Transverse colon (tissue), 4 donors: ENCODE measurements at regions of chr4 and their contacts with region 1.

Region 1: DNA sequence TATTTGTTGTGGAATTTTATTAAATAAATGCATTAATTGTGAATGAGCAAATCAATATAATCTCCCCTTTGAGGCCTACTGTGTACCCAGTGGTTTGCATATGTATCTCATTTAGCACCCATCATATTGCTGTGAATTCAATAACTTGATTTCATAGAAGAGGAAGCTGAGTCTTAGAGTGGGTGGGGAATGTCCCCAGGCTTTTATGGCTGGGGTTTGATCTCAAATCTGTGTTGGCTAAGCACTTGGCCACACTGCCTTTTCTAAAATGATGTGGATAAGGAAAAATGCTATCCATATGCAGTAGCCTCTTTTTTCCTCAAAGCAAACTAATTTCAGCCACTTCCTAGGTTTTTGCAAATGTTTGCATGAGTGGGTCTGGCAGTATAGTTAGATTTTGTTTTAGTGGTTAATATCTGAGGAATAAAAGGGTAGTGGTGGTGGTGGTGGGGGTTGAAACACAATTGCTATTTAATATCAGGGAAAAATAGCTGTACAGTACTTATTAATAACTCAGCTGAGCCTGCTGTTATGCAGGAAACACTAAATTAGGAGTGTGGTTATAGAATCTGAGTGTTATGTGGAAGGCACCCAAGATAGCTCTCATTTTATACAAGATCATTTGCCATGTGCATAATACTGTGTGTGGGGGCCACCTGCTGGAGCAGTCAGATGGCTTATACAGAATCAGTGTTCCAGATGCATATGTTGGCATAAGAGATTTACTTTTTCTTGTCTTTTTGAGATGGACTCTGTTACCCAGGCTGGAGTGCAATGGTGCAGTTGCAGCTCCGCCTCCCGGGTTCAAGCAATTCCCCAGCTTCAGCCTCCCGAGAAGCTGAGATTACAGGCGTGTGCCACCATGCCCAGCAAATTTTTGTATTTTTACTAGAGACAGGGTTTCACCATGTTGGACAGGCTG is 108.0 kb downstream of the TMEM131L start:
- DNase-seq: peak; percentile 69
- H3K4me3 ChIP-seq: no peak overlapping the region
- H3K27ac ChIP-seq: no peak overlapping the region
- H3K4me1 ChIP-seq: peaks cover 0 to 33% (median 10%) of the 10 kb centered on the region in 4 donors
- H3K27me3 ChIP-seq: no peaks in the 10 kb centered on the region
- CTCF ChIP-seq: peak; percentile 52 to 65 (median 54)
- EP300 ChIP-seq: no peak
- POLR2A ChIP-seq: no peak

Region 2: GRCh38 chr4:153142700-153143438 is 431.3 kb before region 1 on chr4:
- in situ Hi-C with region 1: loop called in 1 of 4 experiments (anchors 25 kb)
- intact Hi-C with region 1: loop called (anchors 10 kb)
- DNase-seq: peak; percentile 85
- H3K4me3 ChIP-seq: peak overlapping the region in 1 of 4 donors; percentile 26
- H3K27ac ChIP-seq: peak overlapping the region; percentile 20 to 60 (median 38)
- H3K4me1 ChIP-seq: peaks cover 0 to 14% (median 10%) of the 10 kb centered on the region in 4 donors
- H3K27me3 ChIP-seq: no peaks in the 10 kb centered on the region
- CTCF ChIP-seq: peak; percentile 84 to 93 (median 84)
- EP300 ChIP-seq: no peak
- POLR2A ChIP-seq: no peak

Region 3: DNA sequence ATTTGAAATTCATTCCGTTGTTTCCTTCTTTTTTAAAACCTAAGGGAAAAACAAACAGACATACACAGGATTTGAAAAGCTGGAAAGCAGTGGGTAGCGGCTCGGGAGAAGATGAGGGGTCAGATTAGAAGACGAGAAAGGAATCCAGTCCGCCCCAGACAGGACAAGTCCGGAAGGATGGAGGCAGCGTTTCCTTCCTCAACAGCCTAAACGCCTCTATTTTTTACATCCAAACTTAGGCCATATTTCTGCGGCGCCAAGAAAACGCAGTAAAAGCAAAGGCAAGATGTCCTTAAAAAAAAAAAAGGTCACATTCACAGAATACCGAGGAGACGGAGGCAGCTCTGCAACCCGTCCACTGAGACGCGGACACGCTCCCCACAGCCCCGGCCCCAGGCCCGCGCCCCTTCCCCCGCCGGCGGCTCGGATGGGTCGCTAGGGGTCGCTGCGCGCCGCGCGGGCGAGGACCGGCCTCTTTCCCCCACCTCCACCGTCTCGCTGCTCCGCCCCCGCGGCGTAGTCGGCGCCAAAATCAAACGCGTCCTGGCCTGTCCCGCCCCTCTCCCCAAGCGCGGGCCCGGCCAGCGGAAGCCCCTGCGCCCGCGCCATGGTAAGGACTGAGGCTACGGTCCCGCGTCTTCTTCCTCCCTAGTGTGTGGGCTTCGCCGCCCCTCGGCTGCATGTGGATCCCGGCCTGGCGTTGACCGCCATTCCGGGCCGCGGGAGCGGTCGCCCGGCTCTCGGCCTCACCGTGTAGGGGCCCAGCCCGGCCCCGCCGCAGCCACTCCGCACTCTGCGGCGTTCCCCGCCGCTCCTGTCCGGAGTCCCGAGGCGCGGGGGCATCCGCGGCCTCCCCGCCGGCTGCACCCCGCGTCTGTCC is 229.8 kb before region 1 on chr4 and contains the start of gene MND1:
- in situ Hi-C with region 1: loop called in 3 of 4 experiments (anchors 5 to 25 kb)
- intact Hi-C with region 1: loop called (anchors 1 kb)
- DNase-seq: peak; percentile 86
- H3K4me3 ChIP-seq: peak within 1 kb of the TSS; percentile 51 to 90 (median 80)
- H3K27ac ChIP-seq: peak within 1 kb of the TSS in 2 of 4 donors; percentile 51 to 77
- H3K4me1 ChIP-seq: peaks cover 0 to 20% (median 6%) of the 10 kb centered on the region in 4 donors
- H3K27me3 ChIP-seq: no peaks in the 10 kb centered on the region
- CTCF ChIP-seq: peak; percentile 67 to 98 (median 96)
- EP300 ChIP-seq: no peak
- POLR2A ChIP-seq: no peak
- total RNA-seq, gene MND1: 0.80 to 3.2 (median 1.4) TPM in 3 of 4 donors, not detected in the other

Region 4: DNA sequence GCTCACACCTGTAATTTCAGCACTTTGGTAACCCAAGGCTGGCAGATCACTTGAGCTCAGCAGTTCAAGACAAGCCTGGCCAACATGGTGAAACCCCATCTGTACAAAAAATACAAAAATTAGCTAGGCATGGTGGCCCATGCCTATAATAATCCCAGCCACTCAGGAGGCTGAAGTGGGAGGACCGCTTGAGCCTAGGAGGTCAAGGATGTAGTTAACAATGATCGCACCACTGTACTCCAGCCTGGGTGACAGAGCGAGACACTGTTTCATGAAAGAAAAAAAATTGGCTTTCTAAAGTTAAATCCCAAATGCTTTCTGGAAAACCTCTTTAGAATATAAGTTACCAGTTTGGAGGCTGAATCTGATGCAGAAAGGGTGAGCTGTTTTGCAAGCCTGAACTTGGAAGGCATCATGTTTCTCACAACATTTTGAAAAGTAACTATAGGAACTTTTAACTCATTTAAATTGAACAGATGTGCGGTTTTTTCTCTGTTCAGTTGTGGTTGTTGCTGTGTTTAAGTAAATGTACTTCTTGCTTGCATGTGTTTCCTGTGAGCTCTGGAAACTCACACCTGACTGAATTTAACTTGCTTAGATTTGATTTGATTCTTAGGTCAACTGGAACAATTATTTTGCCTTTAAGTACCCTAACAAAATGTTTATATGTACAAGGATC is 147.8 kb before region 1 on chr4:
- in situ Hi-C with region 1: loop called in 3 of 4 experiments (anchors 5 to 10 kb)
- intact Hi-C with region 1: no loop called
- DNase-seq: no peak
- H3K4me3 ChIP-seq: no peak overlapping the region
- H3K27ac ChIP-seq: no peak overlapping the region
- H3K4me1 ChIP-seq: peaks cover 0 to 12% (median 5%) of the 10 kb centered on the region in 4 donors
- H3K27me3 ChIP-seq: no peaks in the 10 kb centered on the region
- CTCF ChIP-seq: no peak
- EP300 ChIP-seq: no peak
- POLR2A ChIP-seq: no peak

Region 5: GRCh38 chr4:153432968-153433753 is 141.0 kb before region 1 on chr4:
- in situ Hi-C with region 1: loop called in 3 of 4 experiments (anchors 5 to 10 kb)
- intact Hi-C with region 1: no loop called
- DNase-seq: peak; percentile 74
- H3K4me3 ChIP-seq: no peak overlapping the region
- H3K27ac ChIP-seq: peak overlapping the region; percentile 1 to 30 (median 24)
- H3K4me1 ChIP-seq: peaks cover 0 to 12% (median 4%) of the 10 kb centered on the region in 4 donors
- H3K27me3 ChIP-seq: no peaks in the 10 kb centered on the region
- CTCF ChIP-seq: peak; percentile 57 to 85 (median 69)
- EP300 ChIP-seq: no peak
- POLR2A ChIP-seq: no peak

Region 6: GRCh38 chr4:153451911-153452657 is 122.1 kb before region 1 on chr4:
- in situ Hi-C with region 1: no loop called
- intact Hi-C with region 1: loop called (anchors 10 kb)
- DNase-seq: no peak
- H3K4me3 ChIP-seq: no peak overlapping the region
- H3K27ac ChIP-seq: no peak overlapping the region
- H3K4me1 ChIP-seq: peaks cover 0 to 11% (median 0%) of the 10 kb centered on the region in 4 donors
- H3K27me3 ChIP-seq: no peaks in the 10 kb centered on the region
- CTCF ChIP-seq: no peak
- EP300 ChIP-seq: no peak
- POLR2A ChIP-seq: no peak

Region 7: DNA sequence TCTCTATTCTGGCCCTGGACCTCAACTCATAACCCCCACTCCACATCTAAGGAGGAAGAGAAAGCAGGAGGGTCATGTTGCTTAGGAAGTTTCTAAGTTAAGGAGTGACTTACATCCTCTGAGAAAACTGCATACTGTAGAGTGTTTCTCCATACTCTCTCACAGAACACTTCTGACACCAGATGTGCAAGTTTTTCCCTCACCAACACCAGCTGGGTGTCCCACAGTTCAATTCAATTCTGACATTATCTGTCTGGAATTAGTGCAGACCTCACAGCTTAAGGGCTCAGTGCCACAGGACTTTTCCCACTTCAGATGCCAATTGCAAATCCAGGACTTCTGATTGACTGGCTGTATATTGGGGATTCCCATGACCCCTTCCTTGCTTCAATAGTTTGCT is 303.8 kb after region 1 on chr4:
- in situ Hi-C with region 1: no loop called
- intact Hi-C with region 1: no loop called
- DNase-seq: no peak
- H3K4me3 ChIP-seq: no peak overlapping the region
- H3K27ac ChIP-seq: no peak overlapping the region
- H3K4me1 ChIP-seq: no peaks in the 10 kb centered on the region
- H3K27me3 ChIP-seq: no peaks in the 10 kb centered on the region
- CTCF ChIP-seq: no peak
- EP300 ChIP-seq: no peak
- POLR2A ChIP-seq: no peak